H1 (cell line): ENCODE measurements at regions of chr12 and their contacts with region 1.

Region 1: GRCh38 chr12:8849876-8850275 is 27.5 kb downstream of the A2ML1 start:
- DNase-seq: no peak
- H3K4me3 ChIP-seq: no peak overlapping the region
- H3K27ac ChIP-seq: no peak overlapping the region
- H3K4me1 ChIP-seq: no peaks in the 10 kb centered on the region
- H3K27me3 ChIP-seq: no peaks in the 10 kb centered on the region
- CTCF ChIP-seq: no peak
- EP300 ChIP-seq: no peak
- POLR2A ChIP-seq: no peak
- RAD21 ChIP-seq: no peak

Region 2: DNA sequence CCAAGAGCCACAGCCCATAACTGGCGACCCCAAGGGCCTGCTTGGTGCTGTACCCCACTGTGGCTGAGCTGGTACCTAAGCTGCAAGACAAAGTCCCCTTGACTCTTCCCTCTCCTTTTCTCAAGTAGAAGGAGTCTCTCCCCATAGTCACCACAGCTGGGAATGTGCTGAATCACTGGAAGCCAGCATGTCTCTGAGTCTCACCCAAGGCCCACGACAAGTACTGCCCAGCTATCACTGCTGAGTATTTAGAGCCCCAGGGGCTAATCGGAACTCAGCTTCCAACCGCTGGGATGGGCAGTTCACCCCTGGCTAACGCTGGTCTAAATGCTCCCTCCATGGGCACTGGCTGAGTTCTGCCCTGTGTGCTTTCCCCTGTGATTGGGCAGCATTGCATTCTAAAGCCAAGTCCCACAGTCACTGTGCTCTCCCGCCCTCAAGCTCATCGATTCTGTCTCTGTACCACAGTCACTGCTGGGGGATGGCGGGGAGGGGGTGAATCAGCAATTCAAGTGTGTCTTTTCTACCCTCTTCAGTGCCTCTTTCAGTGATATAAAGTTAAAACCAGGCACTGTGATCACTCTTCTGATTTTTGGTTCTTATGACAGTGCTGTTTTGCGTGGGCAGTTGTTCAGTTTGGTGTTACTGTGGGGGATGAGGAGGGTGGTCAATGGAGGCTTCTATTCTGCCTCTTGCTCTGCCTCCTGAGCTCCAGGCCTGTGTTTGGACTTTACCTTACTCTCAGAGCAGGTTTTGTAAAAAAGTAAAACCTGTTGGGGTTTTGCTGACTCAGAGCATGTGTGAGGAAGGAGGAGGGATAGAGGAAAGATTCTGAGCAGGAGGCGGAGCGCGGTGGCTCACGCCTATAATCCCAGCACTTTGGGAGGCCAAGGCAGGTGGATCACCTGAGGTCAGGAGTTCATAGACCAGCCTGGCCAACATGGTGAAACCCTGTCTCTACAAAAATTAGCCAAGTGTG is 21.0 kb before region 1 on chr12:
- CTCF ChIA-PET with region 1: interaction called, 12 read pairs
- POLR2A ChIA-PET with region 1: interaction called, 5 read pairs
- DNase-seq: no peak
- H3K4me3 ChIP-seq: no peak overlapping the region
- H3K27ac ChIP-seq: peak overlapping the region; percentile 36; the same call in 1 of the 2 replicates
- H3K4me1 ChIP-seq: peaks cover 3 to 14% (median 9%) of the 10 kb centered on the region in 4 experiments; a peak in 5 of 7 replicates
- H3K27me3 ChIP-seq: no peaks in the 10 kb centered on the region
- CTCF ChIP-seq: no peak
- EP300 ChIP-seq: no peak
- POLR2A ChIP-seq: no peak
- RAD21 ChIP-seq: no peak

Region 3: DNA sequence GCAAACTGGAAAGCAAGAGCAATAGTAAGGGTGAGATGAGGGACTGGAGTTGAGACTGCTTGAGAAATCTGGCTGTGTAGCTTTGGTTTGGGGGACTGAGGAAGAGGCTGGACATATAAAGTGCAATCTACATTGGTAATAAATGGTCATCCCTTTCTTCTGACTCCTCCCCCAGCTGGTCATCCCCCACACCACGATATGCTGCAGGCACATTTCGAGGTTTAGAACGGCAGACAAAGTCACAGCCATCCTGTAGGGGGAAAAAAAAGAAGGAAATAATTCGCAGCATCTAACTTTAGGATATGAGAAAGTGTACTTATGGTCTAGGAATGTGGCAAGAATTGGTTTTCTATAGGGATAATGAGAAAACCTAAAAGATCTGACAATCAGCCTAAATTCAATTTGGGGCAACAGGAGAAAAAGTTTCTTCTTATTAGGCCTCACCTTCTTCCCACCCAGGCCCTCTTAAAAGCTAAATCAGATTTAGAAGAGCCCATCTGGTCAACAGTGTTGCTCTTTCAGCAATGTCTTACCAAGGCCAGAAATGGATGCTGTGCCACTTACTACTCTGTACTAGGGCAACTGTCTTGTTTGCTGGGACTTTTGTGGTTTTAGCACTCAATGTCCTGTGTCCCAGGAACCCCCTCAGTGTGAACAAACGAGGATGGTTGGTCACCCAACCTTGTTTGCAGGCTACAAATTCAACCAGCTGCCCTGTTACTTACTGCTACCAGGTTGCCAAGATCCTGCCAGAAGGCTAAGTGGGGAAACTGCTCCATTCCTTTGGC is 92.0 kb after region 1 on chr12:
- CTCF ChIA-PET with region 1: no interaction called
- POLR2A ChIA-PET with region 1: no interaction called
- DNase-seq: no peak
- H3K4me3 ChIP-seq: no peak overlapping the region
- H3K27ac ChIP-seq: no peak overlapping the region
- H3K4me1 ChIP-seq: no peaks in the 10 kb centered on the region; a peak in 1 of 7 replicates
- H3K27me3 ChIP-seq: no peaks in the 10 kb centered on the region
- CTCF ChIP-seq: no peak
- EP300 ChIP-seq: no peak
- POLR2A ChIP-seq: peak; percentile 72 to 83
- RAD21 ChIP-seq: no peak